GM23248 (cell line): ENCODE measurements at regions of chr3 and their contacts with region 1.

Region 1: DNA sequence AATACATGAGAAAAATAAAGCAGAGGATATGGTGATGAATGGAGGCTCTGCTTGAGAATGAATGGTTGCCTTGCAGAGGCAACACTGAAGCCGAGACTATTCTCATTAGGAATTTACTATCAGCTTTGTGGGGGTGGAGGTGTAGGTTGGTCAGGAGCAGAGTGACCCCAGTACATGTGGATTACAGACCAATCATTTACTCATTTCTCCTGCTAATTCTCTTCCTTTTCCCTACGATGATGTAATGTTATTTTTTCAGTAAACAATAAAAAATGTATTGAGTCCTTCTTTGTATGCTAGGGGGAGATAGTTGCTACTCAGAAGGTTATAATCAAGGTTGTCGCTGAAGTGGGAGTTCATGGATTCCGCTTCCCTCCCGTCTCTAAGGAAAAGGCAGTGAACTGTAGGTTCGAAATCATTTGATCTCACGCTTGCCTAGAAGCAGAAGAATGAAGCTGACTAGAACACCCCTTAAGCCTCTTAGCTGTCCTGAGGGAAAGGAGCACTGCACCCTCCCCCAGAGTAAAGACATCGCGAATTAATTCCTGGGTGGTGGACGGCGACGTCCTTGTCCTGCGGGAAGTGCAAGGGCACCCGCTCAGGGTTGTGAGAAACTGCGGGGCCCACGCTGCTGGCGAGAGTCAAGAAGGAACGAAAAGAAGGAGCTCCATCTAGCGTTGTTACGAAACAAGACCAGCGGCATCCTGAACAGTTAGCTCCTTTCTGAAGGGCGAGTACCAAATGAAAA is 213.2 kb upstream of the PFN2 start:
- DNase-seq: peak; percentile 92
- H3K4me3 ChIP-seq: peak overlapping the region; percentile 71
- H3K27ac ChIP-seq: no peak overlapping the region
- H3K4me1 ChIP-seq: peaks cover 15% of the 10 kb centered on the region
- H3K27me3 ChIP-seq: no peaks in the 10 kb centered on the region

Region 2: DNA sequence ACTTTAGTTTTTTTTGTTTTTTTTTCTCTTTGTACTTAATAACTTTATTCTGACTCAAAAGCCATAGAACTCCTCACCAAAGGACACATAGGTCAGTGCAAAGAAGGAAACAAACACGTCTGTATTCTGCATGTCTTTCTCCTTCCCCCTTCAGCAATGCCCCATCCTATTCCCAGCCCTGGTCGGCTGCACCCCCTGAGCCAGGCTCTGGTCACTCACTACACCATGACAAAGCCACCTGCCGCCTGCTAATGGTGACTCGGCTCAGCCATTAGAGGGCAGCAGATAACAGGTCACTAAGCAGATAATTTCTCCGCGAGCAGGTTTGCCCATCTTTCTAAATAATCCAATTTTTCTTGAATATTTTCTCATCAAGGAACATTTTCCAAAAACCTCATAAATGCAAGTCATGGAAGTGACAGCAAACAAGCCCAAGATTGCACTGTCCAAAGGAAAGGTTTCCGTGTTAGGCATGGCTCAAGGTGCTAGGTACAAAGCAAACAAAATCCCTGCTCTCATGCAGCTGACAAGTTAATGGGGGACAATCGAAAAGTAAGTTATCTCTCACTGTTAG is 671.6 kb before region 1 on chr3:
- in situ Hi-C with region 1: loop called (anchors 25 kb)
- DNase-seq: peak; percentile 80
- H3K4me3 ChIP-seq: no peak overlapping the region
- H3K27ac ChIP-seq: no peak overlapping the region
- H3K4me1 ChIP-seq: peaks cover 11% of the 10 kb centered on the region
- H3K27me3 ChIP-seq: no peaks in the 10 kb centered on the region

Region 3: GRCh38 chr3:149812606-149813366 is 371.1 kb before region 1 on chr3 and contains the start of gene RNF13:
- in situ Hi-C with region 1: no loop called
- DNase-seq: peak; percentile 99
- H3K4me3 ChIP-seq: peak within 1 kb of the TSS; percentile 91
- H3K27ac ChIP-seq: peak within 1 kb of the TSS; percentile 95
- H3K4me1 ChIP-seq: peaks cover 41% of the 10 kb centered on the region
- H3K27me3 ChIP-seq: no peaks in the 10 kb centered on the region
- total RNA-seq, gene RNF13: 48.7 and 65.4 TPM in 2 replicates

Region 4: GRCh38 chr3:149969940-149970715 is 213.7 kb before region 1 on chr3:
- in situ Hi-C with region 1: loop called (anchors 10 kb)
- DNase-seq: peak; percentile 89
- H3K4me3 ChIP-seq: peak overlapping the region; percentile 92
- H3K27ac ChIP-seq: peak overlapping the region; percentile 96
- H3K4me1 ChIP-seq: peaks cover 34% of the 10 kb centered on the region
- H3K27me3 ChIP-seq: no peaks in the 10 kb centered on the region